PC-3 (cell line): ENCODE measurements at regions of chr1 and their contacts with region 1.

Region 1: DNA sequence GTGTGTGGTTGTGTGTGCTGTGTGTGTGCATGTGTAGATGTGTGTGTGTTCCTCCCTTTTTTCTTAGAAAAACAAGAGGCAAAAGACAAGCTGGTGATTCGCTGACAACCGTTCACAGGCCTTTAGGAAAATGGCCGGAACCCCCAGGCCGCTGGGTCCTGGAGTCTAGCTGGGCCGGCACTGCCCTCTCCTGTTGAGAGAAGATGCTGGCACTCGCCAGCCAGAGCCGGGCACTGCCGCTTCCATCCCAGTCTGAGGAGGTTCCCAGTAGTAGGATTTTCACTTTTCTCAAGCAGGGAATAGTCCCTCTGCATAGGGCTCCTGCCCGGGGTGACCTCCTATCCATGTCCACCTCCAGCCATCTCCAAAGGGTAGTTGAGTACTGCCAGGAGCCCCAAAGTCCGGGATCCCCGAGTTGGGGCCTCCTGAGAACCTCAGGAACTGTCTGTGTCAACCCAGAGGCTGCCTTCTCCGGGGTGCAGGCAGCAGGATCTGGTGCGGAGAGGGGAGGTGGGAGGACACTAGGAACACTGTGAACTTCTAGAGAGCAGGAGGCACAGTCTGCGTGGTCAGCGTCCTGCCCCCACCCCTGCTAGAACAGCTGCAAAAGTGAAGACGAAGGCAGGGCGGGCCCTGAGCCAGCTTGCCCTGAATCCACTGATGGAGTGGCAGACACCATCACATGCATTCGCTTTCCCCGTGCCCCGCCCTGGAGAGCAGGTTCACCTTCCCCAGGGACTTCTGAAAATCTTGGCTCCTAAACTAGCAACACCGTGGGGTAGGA is 44.1 kb upstream of the ARHGEF16 start:
- DNase-seq: peak; percentile 80
- ATAC-seq: peak; percentile 90
- H3K4me3 ChIP-seq: no peak overlapping the region
- H3K27ac ChIP-seq: no peak overlapping the region
- H3K4me1 ChIP-seq: no peaks in the 10 kb centered on the region
- H3K27me3 ChIP-seq: peaks cover 84% of the 10 kb centered on the region
- CTCF ChIP-seq: peak; percentile 91

Region 2: GRCh38 chr1:3069491-3070303 is 340.6 kb before region 1 on chr1:
- CTCF ChIA-PET with region 1: no interaction called
- POLR2A ChIA-PET with region 1: no interaction called
- intact Hi-C with region 1: loop called (anchors 5 kb)
- DNase-seq: peak; percentile 40
- ATAC-seq: peak; percentile 52
- H3K4me3 ChIP-seq: peak overlapping the region; percentile 74
- H3K27ac ChIP-seq: no peak overlapping the region
- H3K4me1 ChIP-seq: peaks cover 3% of the 10 kb centered on the region; the same call in 1 of the 2 replicates
- H3K27me3 ChIP-seq: peaks cover 80% of the 10 kb centered on the region
- CTCF ChIP-seq: peak; percentile 53